ENCODE measurements at regions of chr17 and their contacts with region 1.

Region 1: DNA sequence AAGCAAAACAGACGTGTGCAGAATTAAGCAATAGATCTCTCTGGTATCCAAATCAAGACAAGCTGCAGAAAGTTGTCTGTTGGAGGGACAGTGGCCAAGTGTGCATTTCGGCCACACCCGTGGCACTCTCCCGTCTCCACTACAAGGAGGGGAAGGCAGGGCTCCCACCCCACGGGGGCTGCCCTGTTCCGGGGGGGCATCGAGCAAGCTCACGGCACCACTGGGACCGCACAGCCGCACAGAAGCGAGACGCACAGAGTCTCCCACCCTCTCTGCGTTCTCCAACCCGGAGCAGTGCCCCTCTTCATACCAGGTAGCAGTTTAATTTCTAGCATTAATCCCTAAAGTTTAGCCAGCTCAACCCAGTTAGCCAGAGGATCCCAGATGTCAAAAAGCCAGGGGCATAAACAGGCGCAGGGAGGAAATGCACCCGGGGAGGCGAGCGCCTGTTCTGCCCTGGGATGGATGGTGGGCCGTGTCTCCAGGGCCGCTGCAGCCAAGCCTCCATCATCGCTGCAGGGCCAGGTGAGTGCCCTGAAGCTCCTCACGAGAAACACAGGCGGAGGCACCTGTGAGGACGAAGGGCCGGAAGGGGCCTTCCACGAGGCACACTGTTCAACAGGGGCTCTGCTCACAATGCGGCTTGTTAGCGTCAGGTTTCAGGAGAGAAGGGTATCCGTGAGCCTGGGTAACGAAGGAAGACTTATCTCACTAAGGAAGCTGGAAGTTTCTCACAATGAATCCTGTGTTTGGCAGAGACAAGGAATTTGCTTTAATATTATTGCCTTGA is 42.1 kb upstream of the METRNL start:
- DNase-seq: no peak
- ATAC-seq: no peak
- H3K4me3 ChIP-seq: no peak overlapping the region
- H3K27ac ChIP-seq: no peak overlapping the region
- H3K4me1 ChIP-seq: no peaks in the 10 kb centered on the region
- H3K27me3 ChIP-seq: no peaks in the 10 kb centered on the region
- CTCF ChIP-seq: no peak

Region 2: DNA sequence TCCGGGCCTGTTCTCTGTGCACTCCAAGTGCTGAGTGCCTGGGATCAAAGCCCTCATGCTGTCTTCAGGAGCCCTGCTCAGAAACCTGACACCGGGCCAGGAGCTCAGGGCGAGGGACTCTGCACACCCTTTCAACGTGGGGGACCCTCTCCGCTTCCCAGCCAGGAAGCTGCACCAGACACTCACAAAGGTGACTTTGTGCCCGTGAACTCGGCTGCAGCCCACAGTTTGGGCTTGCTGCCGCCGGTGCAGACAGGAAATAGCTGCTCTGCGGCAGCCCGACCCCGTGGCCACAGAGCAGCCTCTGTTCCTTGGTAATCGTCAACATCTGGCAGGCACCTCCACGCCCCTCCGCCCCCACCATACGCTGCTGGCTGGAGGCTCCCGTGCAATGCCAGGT is 51.3 kb before region 1 on chr17:
- intact Hi-C with region 1: loop called in 2 of 10 experiments (anchors 5 kb)
- DNase-seq: no peak
- ATAC-seq: peak in 4 of 8 donors; percentile 11 to 56 (median 37)
- H3K4me3 ChIP-seq: peak overlapping the region in 1 of 10 donors; percentile 22
- H3K27ac ChIP-seq: peak overlapping the region in 1 of 10 donors; percentile 60
- H3K4me1 ChIP-seq: peaks cover 0 to 16% (median 0%) of the 10 kb centered on the region in 9 donors
- H3K27me3 ChIP-seq: no peaks in the 10 kb centered on the region
- CTCF ChIP-seq: no peak

Region 3: GRCh38 chr17:82993005-82993404 is 44.3 kb before region 1 on chr17:
- intact Hi-C with region 1: loop called in 2 of 10 experiments (anchors 5 kb)
- DNase-seq: no peak
- ATAC-seq: no peak
- H3K4me3 ChIP-seq: no peak overlapping the region
- H3K27ac ChIP-seq: no peak overlapping the region
- H3K4me1 ChIP-seq: no peaks in the 10 kb centered on the region
- H3K27me3 ChIP-seq: no peaks in the 10 kb centered on the region
- CTCF ChIP-seq: no peak